ENCODE measurements at regions of chr11 and their contacts with region 1.

Region 1: DNA sequence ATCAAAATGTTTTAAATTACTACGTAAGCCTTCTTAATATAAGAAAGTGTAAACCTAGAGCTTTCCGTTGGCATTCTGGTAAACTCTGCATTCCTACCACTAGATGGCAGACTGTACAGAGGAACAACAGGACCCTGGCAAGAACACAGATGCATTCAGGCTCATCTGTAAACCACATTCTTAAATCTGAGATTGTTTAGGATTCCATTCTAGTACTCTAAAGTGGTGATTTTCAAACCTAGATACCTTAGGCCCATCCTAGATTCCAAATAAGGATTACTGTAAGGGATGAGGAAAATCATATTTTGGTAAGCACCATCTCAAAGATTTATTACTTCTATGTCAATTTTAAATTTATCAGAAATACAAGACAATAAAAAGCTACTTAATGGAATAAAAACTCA is 26.9 kb downstream of the PICALM start:
- DNase-seq: peak in 1 of 2 donors; percentile 81
- H3K4me3 ChIP-seq: peak overlapping the region; percentile 16 to 19
- H3K27ac ChIP-seq: peak overlapping the region; percentile 5 to 38
- H3K4me1 ChIP-seq: peaks cover 0 to 92% (median 46%) of the 10 kb centered on the region in 4 donors
- H3K27me3 ChIP-seq: no peaks in the 10 kb centered on the region
- CTCF ChIP-seq: peak; percentile 81 to 97

Region 2: GRCh38 chr11:85863855-85864254 is 178.1 kb before region 1 on chr11:
- intact Hi-C with region 1: no loop called
- DNase-seq: no peak
- H3K4me3 ChIP-seq: no peak overlapping the region
- H3K27ac ChIP-seq: no peak overlapping the region
- H3K4me1 ChIP-seq: no peaks in the 10 kb centered on the region
- H3K27me3 ChIP-seq: no peaks in the 10 kb centered on the region
- CTCF ChIP-seq: no peak

Region 3: GRCh38 chr11:85875142-85875922 is 166.6 kb before region 1 on chr11:
- intact Hi-C with region 1: no loop called
- DNase-seq: no peak
- H3K4me3 ChIP-seq: no peak overlapping the region
- H3K27ac ChIP-seq: no peak overlapping the region
- H3K4me1 ChIP-seq: peaks cover 0 to 19% (median 0%) of the 10 kb centered on the region in 4 donors
- H3K27me3 ChIP-seq: no peaks in the 10 kb centered on the region
- CTCF ChIP-seq: no peak

Region 4: DNA sequence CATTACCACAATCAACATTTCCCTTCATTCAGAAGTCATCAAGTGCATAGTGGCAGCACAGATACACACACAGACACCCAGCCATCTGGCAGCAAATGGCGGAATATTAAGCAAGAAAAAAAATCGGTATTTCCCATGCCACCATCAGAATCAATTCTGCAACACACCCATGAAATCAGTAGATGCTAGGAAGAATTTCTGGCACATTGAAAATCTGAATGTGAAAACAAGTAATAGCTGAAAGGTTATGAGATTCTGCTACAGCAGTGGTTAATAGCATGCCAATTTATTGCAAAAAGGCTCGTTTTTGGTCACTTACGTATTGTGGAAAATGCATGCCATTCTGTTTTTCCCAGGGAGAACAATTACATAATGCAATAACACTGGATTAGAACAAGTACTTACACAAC is 64.2 kb before region 1 on chr11:
- intact Hi-C with region 1: no loop called
- DNase-seq: no peak
- H3K4me3 ChIP-seq: no peak overlapping the region
- H3K27ac ChIP-seq: peak overlapping the region in 1 of 2 donors; percentile 35
- H3K4me1 ChIP-seq: peaks cover 0 to 61% (median 5%) of the 10 kb centered on the region in 4 donors
- H3K27me3 ChIP-seq: no peaks in the 10 kb centered on the region
- CTCF ChIP-seq: no peak

Region 5: GRCh38 chr11:86003654-86004053 is 38.3 kb before region 1 on chr11:
- intact Hi-C with region 1: no loop called
- DNase-seq: no peak
- H3K4me3 ChIP-seq: no peak overlapping the region
- H3K27ac ChIP-seq: no peak overlapping the region
- H3K4me1 ChIP-seq: no peaks in the 10 kb centered on the region
- H3K27me3 ChIP-seq: no peaks in the 10 kb centered on the region
- CTCF ChIP-seq: no peak

Region 6: GRCh38 chr11:86193297-86194095 is 151.5 kb after region 1 on chr11:
- intact Hi-C with region 1: loop called (anchors 5 kb)
- DNase-seq: peak in 1 of 2 donors; percentile 60
- H3K4me3 ChIP-seq: peak overlapping the region; percentile 4 to 32
- H3K27ac ChIP-seq: no peak overlapping the region
- H3K4me1 ChIP-seq: peaks cover 0 to 28% (median 5%) of the 10 kb centered on the region in 4 donors
- H3K27me3 ChIP-seq: no peaks in the 10 kb centered on the region
- CTCF ChIP-seq: peak; percentile 65 to 71